ENCODE measurements at regions of chr1 and their contacts with region 1.

Region 1: GRCh38 chr1:185044981-185045813 is at the start of gene RNF2:
- DNase-seq: peak; percentile 64 to 80 (median 77)
- ATAC-seq: peak; percentile 95
- H3K4me3 ChIP-seq: peak within 1 kb of the TSS; percentile 74
- H3K4me3 Mint-ChIP-seq: peak within 1 kb of the TSS; percentile 87 to 96 (median 92)
- H3K27ac ChIP-seq: peak within 1 kb of the TSS; percentile 75
- H3K27ac Mint-ChIP-seq: peak within 1 kb of the TSS; percentile 69 to 96 (median 88)
- H3K4me1 ChIP-seq: peaks cover 11 to 15% of the 10 kb centered on the region in 2 donors
- H3K4me1 Mint-ChIP-seq: peaks cover 27 to 56% (median 45%) of the 10 kb centered on the region in 7 donors
- H3K27me3 ChIP-seq: no peaks in the 10 kb centered on the region
- H3K27me3 Mint-ChIP-seq: peaks cover 0 to 26% (median 0%) of the 10 kb centered on the region in 5 donors
- total RNA-seq, gene RNF2: 14.9 to 27.7 (median 19.6) TPM

Region 2: GRCh38 chr1:183956559-183957188 is 1088.5 kb before region 1 on chr1:
- CTCF ChIA-PET with region 1: no interaction called
- POLR2A ChIA-PET with region 1: no interaction called
- intact Hi-C with region 1: loop called in 1 of 2 experiments (anchors 5 kb)
- DNase-seq: peak in 8 of 9 donors; percentile 60 to 82 (median 71)
- ATAC-seq: peak; percentile 99
- H3K4me3 ChIP-seq: no peak overlapping the region
- H3K4me3 Mint-ChIP-seq: peak overlapping the region in 8 of 10 donors; percentile 10 to 76 (median 30)
- H3K27ac ChIP-seq: peak overlapping the region; percentile 15
- H3K27ac Mint-ChIP-seq: no peak overlapping the region
- H3K4me1 ChIP-seq: peaks cover 17 to 36% of the 10 kb centered on the region in 2 donors
- H3K4me1 Mint-ChIP-seq: peaks cover 0 to 13% (median 9%) of the 10 kb centered on the region in 7 donors
- H3K27me3 ChIP-seq: no peaks in the 10 kb centered on the region
- H3K27me3 Mint-ChIP-seq: no peaks in the 10 kb centered on the region

Region 3: GRCh38 chr1:184535191-184535970 is 509.8 kb before region 1 on chr1:
- CTCF ChIA-PET with region 1: no interaction called
- POLR2A ChIA-PET with region 1: no interaction called
- intact Hi-C with region 1: no loop called
- DNase-seq: no peak
- ATAC-seq: no peak
- H3K4me3 ChIP-seq: no peak overlapping the region
- H3K4me3 Mint-ChIP-seq: no peak overlapping the region
- H3K27ac ChIP-seq: no peak overlapping the region
- H3K27ac Mint-ChIP-seq: no peak overlapping the region
- H3K4me1 ChIP-seq: no peaks in the 10 kb centered on the region
- H3K4me1 Mint-ChIP-seq: peaks cover 0 to 8% (median 0%) of the 10 kb centered on the region in 7 donors
- H3K27me3 ChIP-seq: no peaks in the 10 kb centered on the region
- H3K27me3 Mint-ChIP-seq: peaks cover 6 to 22% (median 15%) of the 10 kb centered on the region in 5 donors

Region 4: GRCh38 chr1:184973272-184974055 is 71.7 kb before region 1 on chr1:
- CTCF ChIA-PET with region 1: no interaction called
- POLR2A ChIA-PET with region 1: no interaction called
- intact Hi-C with region 1: loop called (anchors 2 kb)
- DNase-seq: peak in 1 of 9 donors; percentile 36
- ATAC-seq: peak; percentile 73
- H3K4me3 ChIP-seq: peak overlapping the region; percentile 63
- H3K4me3 Mint-ChIP-seq: peak overlapping the region; percentile 82 to 96 (median 90)
- H3K27ac ChIP-seq: peak overlapping the region; percentile 7
- H3K27ac Mint-ChIP-seq: peak overlapping the region; percentile 11 to 94 (median 58)
- H3K4me1 ChIP-seq: peaks cover 0 to 24% of the 10 kb centered on the region in 2 donors
- H3K4me1 Mint-ChIP-seq: peaks cover 9 to 56% (median 21%) of the 10 kb centered on the region in 7 donors
- H3K27me3 ChIP-seq: no peaks in the 10 kb centered on the region
- H3K27me3 Mint-ChIP-seq: peaks cover 12 to 38% (median 27%) of the 10 kb centered on the region in 5 donors

Region 5: GRCh38 chr1:185170291-185170848 is 125.2 kb after region 1 on chr1:
- CTCF ChIA-PET with region 1: interaction called, 3 read pairs
- POLR2A ChIA-PET with region 1: interaction called, 3 read pairs
- intact Hi-C with region 1: loop called in 1 of 2 experiments (anchors 1 kb)
- DNase-seq: peak in 8 of 9 donors; percentile 37 to 71 (median 65)
- ATAC-seq: peak; percentile 84
- H3K4me3 ChIP-seq: no peak overlapping the region
- H3K4me3 Mint-ChIP-seq: peak overlapping the region in 4 of 10 donors; percentile 35 to 56 (median 53)
- H3K27ac ChIP-seq: no peak overlapping the region
- H3K27ac Mint-ChIP-seq: peak overlapping the region in 4 of 9 donors; percentile 6 to 62 (median 43)
- H3K4me1 ChIP-seq: peaks cover 0 to 4% of the 10 kb centered on the region in 2 donors
- H3K4me1 Mint-ChIP-seq: peaks cover 0 to 17% (median 5%) of the 10 kb centered on the region in 7 donors
- H3K27me3 ChIP-seq: no peaks in the 10 kb centered on the region
- H3K27me3 Mint-ChIP-seq: no peaks in the 10 kb centered on the region

Region 6: DNA sequence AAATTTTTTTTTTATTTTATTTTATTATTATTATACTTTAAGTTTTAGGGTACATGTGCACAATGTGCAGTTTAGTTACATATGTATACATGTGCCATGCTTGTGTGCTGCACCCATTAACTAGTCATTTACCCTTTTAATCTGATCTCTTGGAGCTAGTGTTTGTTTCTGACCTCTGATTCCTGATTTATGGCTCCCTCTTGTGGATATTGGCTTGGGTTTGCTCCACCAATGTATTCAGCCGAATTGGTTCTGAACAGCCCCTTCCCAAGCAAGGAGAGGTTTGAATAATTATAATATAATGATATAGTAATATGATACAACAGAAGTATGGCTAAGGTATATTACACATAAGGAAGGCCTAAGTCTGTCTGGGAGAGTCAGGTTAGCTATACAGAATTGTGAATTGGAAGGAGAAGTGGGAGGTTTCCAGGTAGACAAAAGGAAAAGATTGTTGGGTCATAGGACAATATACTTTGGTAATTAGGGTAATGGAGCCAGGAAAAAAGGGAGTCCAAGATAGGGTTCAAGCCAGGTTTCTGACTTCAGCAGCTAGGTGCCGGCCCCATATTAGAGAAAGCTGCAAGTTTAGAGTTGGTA is 635.9 kb after region 1 on chr1:
- CTCF ChIA-PET with region 1: no interaction called
- POLR2A ChIA-PET with region 1: interaction called, 3 read pairs
- intact Hi-C with region 1: loop called (anchors 5 to 10 kb)
- DNase-seq: peak in 6 of 9 donors; percentile 19 to 53 (median 40)
- ATAC-seq: peak; percentile 65
- H3K4me3 ChIP-seq: no peak overlapping the region
- H3K4me3 Mint-ChIP-seq: peak overlapping the region in 2 of 10 donors; percentile 12 to 39
- H3K27ac ChIP-seq: no peak overlapping the region
- H3K27ac Mint-ChIP-seq: peak overlapping the region in 1 of 9 donors; percentile 14
- H3K4me1 ChIP-seq: peaks cover 4 to 13% of the 10 kb centered on the region in 2 donors
- H3K4me1 Mint-ChIP-seq: peaks cover 13 to 41% (median 28%) of the 10 kb centered on the region in 7 donors
- H3K27me3 ChIP-seq: no peaks in the 10 kb centered on the region
- H3K27me3 Mint-ChIP-seq: peaks cover 0 to 16% (median 0%) of the 10 kb centered on the region in 5 donors

Region 7: DNA sequence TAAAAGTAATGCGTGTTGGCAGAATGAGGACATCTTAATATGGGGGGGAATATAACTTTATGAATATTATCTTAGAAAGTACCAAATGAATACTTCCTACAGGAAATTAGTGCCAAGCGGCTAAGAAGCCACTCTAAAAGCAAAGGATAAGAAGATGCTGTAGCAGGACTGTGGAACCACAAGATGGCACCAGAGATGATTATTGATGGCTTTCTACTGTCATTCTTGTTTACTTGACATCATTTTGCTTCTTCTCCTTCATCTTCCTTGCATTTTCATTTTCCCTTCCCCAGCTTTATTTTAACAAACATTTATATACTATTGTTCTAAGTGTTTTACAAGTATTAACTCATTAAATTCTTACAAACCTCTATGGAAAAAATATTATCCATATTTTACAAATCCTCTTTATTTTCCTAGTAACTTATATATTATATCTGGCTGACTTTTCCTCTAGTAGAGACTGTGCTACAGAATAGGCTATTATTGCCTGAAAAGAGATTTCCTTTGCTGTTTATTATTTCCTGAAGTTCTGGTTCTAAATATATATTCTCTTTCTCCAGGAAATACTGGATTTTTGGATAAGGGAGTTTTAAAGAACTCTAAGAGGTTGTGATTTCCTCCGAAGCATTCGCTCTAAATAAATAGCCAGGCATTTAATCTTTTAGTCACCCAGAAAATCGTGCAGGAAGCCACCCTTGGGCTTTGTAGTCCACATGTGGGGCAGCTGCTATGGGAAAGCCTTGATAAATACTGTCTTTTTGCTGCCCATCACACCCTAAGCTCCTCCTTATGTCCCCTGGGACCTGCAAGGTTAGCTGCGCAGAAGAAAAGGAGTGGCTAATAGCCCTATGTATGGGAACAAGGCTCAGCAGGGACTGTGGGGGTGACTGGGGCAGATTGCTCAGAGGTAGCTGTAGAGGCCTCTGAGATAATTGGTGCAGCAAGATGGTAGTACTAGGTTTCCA is 1260.1 kb after region 1 on chr1:
- CTCF ChIA-PET with region 1: no interaction called
- POLR2A ChIA-PET with region 1: no interaction called
- intact Hi-C with region 1: loop called in 1 of 2 experiments (anchors 10 kb)
- DNase-seq: peak in 6 of 9 donors; percentile 34 to 51 (median 42)
- ATAC-seq: peak; percentile 39
- H3K4me3 ChIP-seq: no peak overlapping the region
- H3K4me3 Mint-ChIP-seq: peak overlapping the region in 9 of 10 donors; percentile 2 to 76 (median 45)
- H3K27ac ChIP-seq: peak overlapping the region; percentile 58
- H3K27ac Mint-ChIP-seq: peak overlapping the region; percentile 82 to 95 (median 91)
- H3K4me1 ChIP-seq: peaks cover 3 to 83% of the 10 kb centered on the region in 2 donors
- H3K4me1 Mint-ChIP-seq: peaks cover 35 to 66% (median 56%) of the 10 kb centered on the region in 7 donors
- H3K27me3 ChIP-seq: no peaks in the 10 kb centered on the region
- H3K27me3 Mint-ChIP-seq: no peaks in the 10 kb centered on the region